WTC11 (cell line): ENCODE measurements at regions of chr12 and their contacts with region 1.

Region 1: DNA sequence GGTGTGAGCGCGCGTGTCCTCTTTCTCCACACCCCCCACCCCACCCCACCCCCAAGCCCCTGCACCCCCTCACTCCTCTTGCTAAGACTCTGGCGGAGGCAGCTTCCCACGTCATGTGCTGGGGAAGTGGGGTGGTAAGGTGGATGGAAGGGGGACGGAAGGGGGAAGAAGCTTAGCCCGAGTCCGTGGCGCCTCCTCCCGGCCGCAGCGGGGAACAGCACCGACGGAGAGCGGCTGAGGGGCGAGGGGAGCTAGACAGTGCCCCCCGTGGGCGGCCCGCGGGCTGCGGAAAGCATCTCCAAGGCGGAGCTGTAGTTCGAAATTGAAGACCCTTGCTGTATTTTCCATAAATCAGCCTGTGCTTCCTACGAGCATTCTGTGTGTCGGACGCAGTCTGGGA is 588 bp upstream of the GRIN2B start:
- DNase-seq: peak; percentile 92
- ATAC-seq: peak; percentile 84
- H3K4me3 Mint-ChIP-seq: peak overlapping the region; percentile 92
- H3K27ac Mint-ChIP-seq: no peak overlapping the region
- H3K4me1 Mint-ChIP-seq: peaks cover 17% of the 10 kb centered on the region
- H3K27me3 Mint-ChIP-seq: peaks cover 74% of the 10 kb centered on the region
- CTCF ChIP-seq: peak; percentile 88

Region 2: GRCh38 chr12:13255792-13256691 is 725.9 kb before region 1 on chr12:
- CTCF ChIA-PET with region 1: interaction called, 38 read pairs
- POLR2A ChIA-PET with region 1: no interaction called
- DNase-seq: peak; percentile 98
- ATAC-seq: peak; percentile 93
- H3K4me3 Mint-ChIP-seq: peak overlapping the region; percentile 53
- H3K27ac Mint-ChIP-seq: peak overlapping the region; percentile 94
- H3K4me1 Mint-ChIP-seq: peaks cover 32% of the 10 kb centered on the region
- H3K27me3 Mint-ChIP-seq: peaks cover 21% of the 10 kb centered on the region
- CTCF ChIP-seq: peak; percentile 94

Region 3: GRCh38 chr12:13362260-13362841 is 619.6 kb before region 1 on chr12:
- CTCF ChIA-PET with region 1: interaction called, 13 read pairs
- POLR2A ChIA-PET with region 1: no interaction called
- DNase-seq: peak; percentile 80
- ATAC-seq: peak; percentile 99
- H3K4me3 Mint-ChIP-seq: no peak overlapping the region
- H3K27ac Mint-ChIP-seq: no peak overlapping the region
- H3K4me1 Mint-ChIP-seq: peaks cover 7% of the 10 kb centered on the region
- H3K27me3 Mint-ChIP-seq: no peaks in the 10 kb centered on the region
- CTCF ChIP-seq: peak; percentile 72

Region 4: GRCh38 chr12:13745111-13745685 is 236.8 kb before region 1 on chr12:
- CTCF ChIA-PET with region 1: interaction called, 17 read pairs
- POLR2A ChIA-PET with region 1: no interaction called
- DNase-seq: no peak
- ATAC-seq: no peak
- H3K4me3 Mint-ChIP-seq: no peak overlapping the region
- H3K27ac Mint-ChIP-seq: no peak overlapping the region
- H3K4me1 Mint-ChIP-seq: peaks cover 55% of the 10 kb centered on the region
- H3K27me3 Mint-ChIP-seq: peaks cover 88% of the 10 kb centered on the region
- CTCF ChIP-seq: no peak

Region 5: GRCh38 chr12:13896063-13896626 is 85.8 kb before region 1 on chr12:
- CTCF ChIA-PET with region 1: interaction called, 11 read pairs
- POLR2A ChIA-PET with region 1: no interaction called
- DNase-seq: no peak
- ATAC-seq: no peak
- H3K4me3 Mint-ChIP-seq: no peak overlapping the region
- H3K27ac Mint-ChIP-seq: no peak overlapping the region
- H3K4me1 Mint-ChIP-seq: peaks cover 16% of the 10 kb centered on the region
- H3K27me3 Mint-ChIP-seq: no peaks in the 10 kb centered on the region
- CTCF ChIP-seq: no peak

Region 6: DNA sequence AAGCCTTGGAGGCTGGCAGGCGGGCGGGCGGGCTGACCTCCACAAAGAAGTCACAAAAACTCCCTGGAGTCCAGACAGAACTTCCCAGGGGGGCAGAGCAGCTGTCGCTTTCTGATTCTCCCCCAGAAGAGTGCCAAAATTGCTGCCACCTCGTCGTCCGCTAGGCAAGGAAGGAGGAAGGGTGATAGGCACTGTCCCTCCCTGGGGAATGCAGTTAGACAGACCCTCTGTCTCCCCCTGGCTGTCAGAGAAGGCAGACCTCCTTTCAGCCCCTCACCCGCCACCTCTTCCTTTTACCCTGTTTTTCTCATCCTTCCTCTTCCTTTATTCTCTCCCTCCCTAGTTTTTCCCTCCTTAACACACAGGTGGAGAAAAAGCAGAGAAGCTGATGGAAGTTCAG is 19.3 kb before region 1 on chr12:
- CTCF ChIA-PET with region 1: interaction called, 16 read pairs
- POLR2A ChIA-PET with region 1: no interaction called
- DNase-seq: peak; percentile 58
- ATAC-seq: peak; percentile 81
- H3K4me3 Mint-ChIP-seq: no peak overlapping the region
- H3K27ac Mint-ChIP-seq: no peak overlapping the region
- H3K4me1 Mint-ChIP-seq: peaks cover 39% of the 10 kb centered on the region
- H3K27me3 Mint-ChIP-seq: no peaks in the 10 kb centered on the region; the same call in 1 of the 2 replicates
- CTCF ChIP-seq: peak; percentile 65

Region 7: GRCh38 chr12:14167005-14167628 is 185.1 kb after region 1 on chr12:
- CTCF ChIA-PET with region 1: interaction called, 22 read pairs
- POLR2A ChIA-PET with region 1: no interaction called
- DNase-seq: peak; percentile 61
- ATAC-seq: peak; percentile 44
- H3K4me3 Mint-ChIP-seq: no peak overlapping the region
- H3K27ac Mint-ChIP-seq: no peak overlapping the region
- H3K4me1 Mint-ChIP-seq: no peaks in the 10 kb centered on the region; the same call in 1 of the 2 replicates
- H3K27me3 Mint-ChIP-seq: peaks cover 6% of the 10 kb centered on the region
- CTCF ChIP-seq: peak; percentile 76